AG04450 (cell line): ENCODE measurements at regions of chr11 and their contacts with region 1.

Region 1: DNA sequence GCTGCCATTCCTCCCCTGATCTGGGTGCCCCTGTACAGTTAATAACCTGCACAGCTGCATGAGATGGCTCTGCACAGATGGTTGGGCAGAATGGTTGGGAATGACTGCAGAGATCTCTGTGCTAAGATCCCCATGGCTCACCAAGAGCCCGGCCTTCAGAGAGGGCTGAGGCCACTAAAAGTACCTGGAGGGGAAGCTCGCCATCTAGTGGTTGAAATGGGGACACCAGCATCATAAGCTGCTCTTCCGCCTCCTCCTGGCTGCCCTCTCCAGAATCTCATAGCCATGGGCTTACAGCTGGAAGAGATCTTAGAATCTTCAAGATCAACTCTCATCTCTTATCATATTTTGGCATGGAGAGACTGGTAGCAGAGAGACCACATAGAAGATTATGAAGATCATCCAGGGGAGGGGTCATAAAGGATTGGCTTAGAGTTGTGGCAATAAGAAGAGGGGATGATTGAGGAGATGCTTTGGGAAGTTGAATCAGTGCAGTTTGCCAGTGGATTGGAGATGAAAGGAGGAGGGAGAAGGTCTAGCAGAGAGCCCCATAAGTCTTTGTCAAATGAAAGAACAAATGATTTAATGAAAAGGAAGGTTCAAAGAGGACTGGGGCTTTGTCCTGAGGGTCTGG is 22.0 kb upstream of the TLCD5 start:
- DNase-seq: peak; percentile 55
- H3K4me3 ChIP-seq: no peak overlapping the region
- H3K27ac ChIP-seq: no peak overlapping the region
- H3K27me3 ChIP-seq: peaks cover 21% of the 10 kb centered on the region
- CTCF ChIP-seq: peak; percentile 99

Region 2: GRCh38 chr11:120172054-120172911 is 130.8 kb before region 1 on chr11:
- CTCF ChIA-PET with region 1: interaction called, 301 read pairs
- POLR2A ChIA-PET with region 1: no interaction called
- DNase-seq: no peak
- H3K4me3 ChIP-seq: no peak overlapping the region
- H3K27ac ChIP-seq: no peak overlapping the region
- H3K27me3 ChIP-seq: peaks cover 46% of the 10 kb centered on the region
- CTCF ChIP-seq: peak; percentile 85

Region 3: GRCh38 chr11:120210626-120211521 is 92.2 kb before region 1 on chr11 and contains the start of gene OAF:
- CTCF ChIA-PET with region 1: interaction called, 11 read pairs
- POLR2A ChIA-PET with region 1: no interaction called
- DNase-seq: peak; percentile 71
- H3K4me3 ChIP-seq: peak within 1 kb of the TSS; percentile 74
- H3K27ac ChIP-seq: peak within 1 kb of the TSS; percentile 95
- H3K27me3 ChIP-seq: no peaks in the 10 kb centered on the region
- CTCF ChIP-seq: no peak
- polyA plus RNA-seq, gene OAF: 26.6 and 37.0 TPM in 2 replicates

Region 4: GRCh38 chr11:120235024-120235861 is 67.9 kb before region 1 on chr11:
- CTCF ChIA-PET with region 1: interaction called, 156 read pairs
- POLR2A ChIA-PET with region 1: no interaction called
- DNase-seq: no peak
- H3K4me3 ChIP-seq: no peak overlapping the region
- H3K27ac ChIP-seq: no peak overlapping the region
- H3K27me3 ChIP-seq: peaks cover 48% of the 10 kb centered on the region
- CTCF ChIP-seq: peak; percentile 83

Region 5: GRCh38 chr11:120272303-120272702 is 30.8 kb before region 1 on chr11:
- CTCF ChIA-PET with region 1: interaction called, 17 read pairs
- POLR2A ChIA-PET with region 1: no interaction called
- DNase-seq: no peak
- H3K4me3 ChIP-seq: no peak overlapping the region
- H3K27ac ChIP-seq: no peak overlapping the region
- H3K27me3 ChIP-seq: peaks cover 21% of the 10 kb centered on the region
- CTCF ChIP-seq: no peak

Region 6: GRCh38 chr11:120324932-120325810 is 22.1 kb after region 1 on chr11 and contains the start of gene TLCD5:
- CTCF ChIA-PET with region 1: interaction called, 10 read pairs
- POLR2A ChIA-PET with region 1: interaction called, 3 read pairs
- DNase-seq: no peak
- H3K4me3 ChIP-seq: peak within 1 kb of the TSS; percentile 70
- H3K27ac ChIP-seq: peak within 1 kb of the TSS; percentile 83
- H3K27me3 ChIP-seq: no peaks in the 10 kb centered on the region
- CTCF ChIP-seq: peak; percentile 15; the same call in 1 of the 2 replicates
- polyA plus RNA-seq, gene TLCD5: 13.6 and 14.9 TPM in 2 replicates